ENCODE measurements at regions of chr15 and their contacts with region 1.

Region 1: DNA sequence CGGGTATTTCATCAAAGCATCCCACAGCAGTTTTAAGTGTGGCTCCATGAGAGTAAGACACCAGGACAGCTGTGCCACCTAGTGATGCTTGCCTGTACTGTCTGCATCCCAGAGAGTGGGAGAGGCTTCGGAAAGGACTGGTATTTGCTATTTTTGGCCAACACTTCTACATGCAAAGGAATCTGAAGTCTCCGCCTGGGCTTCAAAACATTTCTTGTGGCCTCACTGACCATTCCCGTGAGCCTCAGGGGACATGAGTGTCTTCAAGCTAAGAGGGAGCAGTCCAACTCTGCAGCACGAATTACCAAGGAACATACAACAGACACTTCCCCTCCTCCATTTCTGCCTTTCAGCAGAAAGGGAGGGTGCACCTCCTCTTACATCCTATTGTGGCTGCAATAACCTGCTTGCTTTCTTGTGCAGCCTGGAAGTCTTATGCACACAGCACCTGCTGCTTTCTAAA is 177.5 kb downstream of the RORA start:
- DNase-seq: peak in 2 of 3 donors; percentile 60 to 68
- ATAC-seq: peak; percentile 88
- H3K4me3 ChIP-seq: no peak overlapping the region
- H3K27ac ChIP-seq: no peak overlapping the region
- H3K4me1 ChIP-seq: no peaks in the 10 kb centered on the region
- H3K27me3 ChIP-seq: no peaks in the 10 kb centered on the region

Region 2: DNA sequence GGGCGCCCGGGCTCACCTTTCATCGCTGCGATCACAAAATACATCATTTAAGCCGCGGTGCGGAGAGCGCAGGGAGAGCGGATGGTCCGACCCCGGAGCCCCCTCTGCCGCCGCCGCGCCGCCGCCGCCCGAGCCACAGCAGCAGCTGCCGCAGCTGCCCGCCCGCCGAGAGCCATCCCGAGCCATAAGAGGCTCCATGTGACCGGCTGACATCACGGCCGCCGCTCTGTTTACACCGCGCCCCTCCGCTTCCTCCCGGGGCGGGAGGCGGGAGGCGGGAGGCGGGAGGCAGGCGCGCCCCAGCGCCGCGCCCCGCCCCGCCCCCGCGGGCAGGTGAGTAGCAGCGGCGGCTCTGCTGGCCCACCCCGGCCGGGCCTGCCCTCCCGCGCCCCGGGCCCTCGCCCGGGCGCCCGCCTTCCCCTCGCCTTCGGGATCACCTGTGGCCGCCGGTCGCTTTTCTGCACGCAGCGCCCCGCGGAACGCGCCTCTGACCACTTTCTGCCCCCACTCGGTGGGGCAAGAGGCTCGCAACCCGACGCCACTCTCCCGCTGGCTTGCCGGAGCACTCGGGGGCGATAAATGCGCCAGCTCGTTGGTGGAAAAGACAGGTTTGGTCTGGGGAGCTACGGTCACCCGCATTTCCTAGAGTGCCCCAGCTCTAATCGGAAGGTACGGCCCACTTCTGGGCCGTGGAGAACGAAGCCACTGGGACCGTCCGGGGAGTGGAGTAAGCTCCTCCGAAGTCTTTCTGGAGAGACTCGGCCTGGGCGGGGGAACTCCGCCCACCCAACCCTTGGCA is 459.0 kb before region 1 on chr15:
- intact Hi-C with region 1: loop called in 3 of 4 experiments (anchors 5 to 10 kb)
- DNase-seq: peak; percentile 86 to 95 (median 93)
- ATAC-seq: peak; percentile 95
- H3K4me3 ChIP-seq: peak overlapping the region; percentile 89
- H3K27ac ChIP-seq: peak overlapping the region; percentile 28
- H3K4me1 ChIP-seq: peaks cover 2% of the 10 kb centered on the region
- H3K27me3 ChIP-seq: no peaks in the 10 kb centered on the region

Region 3: GRCh38 chr15:60916679-60917460 is 134.7 kb before region 1 on chr15:
- intact Hi-C with region 1: loop called in 3 of 4 experiments (anchors 5 to 10 kb)
- DNase-seq: peak; percentile 88 to 96 (median 92)
- ATAC-seq: peak; percentile 89 to 90
- H3K4me3 ChIP-seq: no peak overlapping the region
- H3K27ac ChIP-seq: peak overlapping the region; percentile 36
- H3K4me1 ChIP-seq: peaks cover 9% of the 10 kb centered on the region
- H3K27me3 ChIP-seq: no peaks in the 10 kb centered on the region

Region 4: GRCh38 chr15:60994963-60995475 is 56.6 kb before region 1 on chr15:
- intact Hi-C with region 1: no loop called
- DNase-seq: peak in 2 of 3 donors; percentile 20 to 59
- ATAC-seq: peak; percentile 40 to 67
- H3K4me3 ChIP-seq: no peak overlapping the region
- H3K27ac ChIP-seq: no peak overlapping the region
- H3K4me1 ChIP-seq: peaks cover 4% of the 10 kb centered on the region
- H3K27me3 ChIP-seq: no peaks in the 10 kb centered on the region

Region 5: GRCh38 chr15:61011576-61012336 is 39.8 kb before region 1 on chr15:
- intact Hi-C with region 1: no loop called
- DNase-seq: no peak
- ATAC-seq: no peak
- H3K4me3 ChIP-seq: no peak overlapping the region
- H3K27ac ChIP-seq: no peak overlapping the region
- H3K4me1 ChIP-seq: no peaks in the 10 kb centered on the region
- H3K27me3 ChIP-seq: no peaks in the 10 kb centered on the region

Region 6: GRCh38 chr15:61184431-61184830 is 132.8 kb after region 1 on chr15:
- intact Hi-C with region 1: no loop called
- DNase-seq: no peak
- ATAC-seq: no peak
- H3K4me3 ChIP-seq: no peak overlapping the region
- H3K27ac ChIP-seq: no peak overlapping the region
- H3K4me1 ChIP-seq: no peaks in the 10 kb centered on the region
- H3K27me3 ChIP-seq: no peaks in the 10 kb centered on the region